ENCODE measurements at regions of chr12 and their contacts with region 1.

Region 1: GRCh38 chr12:58540480-58541299 is 379.6 kb downstream of the LRIG3 start:
- DNase-seq: peak; percentile 92
- ATAC-seq: peak; percentile 98
- H3K4me3 ChIP-seq: no peak overlapping the region
- H3K27ac ChIP-seq: peak overlapping the region; percentile 3; the same call in 1 of the 2 replicates
- H3K4me1 ChIP-seq: peaks cover 33% of the 10 kb centered on the region
- H3K27me3 ChIP-seq: no peaks in the 10 kb centered on the region
- CTCF ChIP-seq: peak; percentile 94

Region 2: DNA sequence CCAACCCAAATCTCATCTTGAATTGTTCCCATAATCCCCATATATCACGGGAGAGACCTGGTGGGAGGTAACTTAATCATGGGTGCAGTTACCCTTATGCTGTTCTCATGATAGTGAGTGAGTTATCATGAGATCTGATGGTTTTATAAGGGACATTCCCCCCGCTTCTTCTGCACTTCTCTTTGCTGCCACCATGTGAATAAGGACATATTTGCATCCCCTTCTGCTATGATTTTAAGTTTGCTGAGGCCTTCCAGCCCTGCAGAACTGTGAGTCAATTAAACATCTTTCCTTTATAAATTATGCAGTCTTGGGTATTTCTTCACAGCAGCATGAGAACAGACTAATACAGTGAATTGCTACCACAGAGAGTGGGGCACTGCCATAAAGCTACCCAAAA is 200.5 kb after region 1 on chr12:
- CTCF ChIA-PET with region 1: no interaction called
- POLR2A ChIA-PET with region 1: no interaction called
- intact Hi-C with region 1: loop called (anchors 2 kb)
- DNase-seq: no peak
- ATAC-seq: no peak; the same call in 1 of the 2 replicates
- H3K4me3 ChIP-seq: no peak overlapping the region
- H3K27ac ChIP-seq: no peak overlapping the region
- H3K4me1 ChIP-seq: peaks cover 13% of the 10 kb centered on the region
- H3K27me3 ChIP-seq: no peaks in the 10 kb centered on the region
- CTCF ChIP-seq: no peak; the same call in 1 of the 2 replicates

Region 3: GRCh38 chr12:58833853-58834252 is 293.2 kb after region 1 on chr12:
- CTCF ChIA-PET with region 1: interaction called, 7 read pairs
- POLR2A ChIA-PET with region 1: no interaction called
- intact Hi-C with region 1: loop called (anchors 2 kb)
- DNase-seq: peak; percentile 27
- ATAC-seq: peak; percentile 33; the same call in 1 of the 2 replicates
- H3K4me3 ChIP-seq: no peak overlapping the region
- H3K27ac ChIP-seq: no peak overlapping the region
- H3K4me1 ChIP-seq: no peaks in the 10 kb centered on the region; the same call in 1 of the 2 replicates
- H3K27me3 ChIP-seq: no peaks in the 10 kb centered on the region
- CTCF ChIP-seq: peak; percentile 54

Measured in PC-3 (cell line).